Heart left ventricle (tissue), 16 donors: ENCODE measurements at regions of chr2 and their contacts with region 1.

Region 1: GRCh38 chr2:110157153-110157793 is 41.7 kb upstream of the MALL start:
- DNase-seq: peak in 2 of 5 donors; percentile 14 to 21
- ATAC-seq: peak; percentile 58 to 88 (median 78)
- H3K4me3 ChIP-seq: no peak overlapping the region
- H3K27ac ChIP-seq: peak overlapping the region in 4 of 12 donors; percentile 36 to 66 (median 52)
- H3K4me1 ChIP-seq: peaks cover 0 to 11% (median 0%) of the 10 kb centered on the region in 12 donors
- H3K27me3 ChIP-seq: no peaks in the 10 kb centered on the region
- CTCF ChIP-seq: peak; percentile 68 to 88 (median 82)
- POLR2A ChIP-seq: no peak

Region 2: GRCh38 chr2:110116033-110116710 is 41.1 kb before region 1 on chr2:
- intact Hi-C with region 1: loop called in 5 of 10 experiments (anchors 2 to 5 kb)
- DNase-seq: peak; percentile 64 to 76 (median 66)
- ATAC-seq: peak; percentile 72 to 83 (median 75)
- H3K4me3 ChIP-seq: peak overlapping the region; percentile 20 to 69 (median 56)
- H3K27ac ChIP-seq: peak overlapping the region; percentile 30 to 88 (median 84)
- H3K4me1 ChIP-seq: peaks cover 0 to 50% (median 23%) of the 10 kb centered on the region in 12 donors
- H3K27me3 ChIP-seq: peaks cover 0 to 27% (median 17%) of the 10 kb centered on the region in 9 donors
- CTCF ChIP-seq: peak; percentile 25 to 73 (median 52)
- POLR2A ChIP-seq: no peak

Region 3: GRCh38 chr2:110677530-110678456 is 520.5 kb after region 1 on chr2 and contains the start of gene BUB1:
- intact Hi-C with region 1: no loop called
- DNase-seq: peak; percentile 97 to 98 (median 98)
- ATAC-seq: peak; percentile 99 to 100 (median 100)
- H3K4me3 ChIP-seq: peak within 1 kb of the TSS; percentile 61 to 89 (median 76)
- H3K27ac ChIP-seq: peak within 1 kb of the TSS; percentile 59 to 91 (median 86)
- H3K4me1 ChIP-seq: peaks cover 0 to 35% (median 8%) of the 10 kb centered on the region in 12 donors
- H3K27me3 ChIP-seq: no peaks in the 10 kb centered on the region
- CTCF ChIP-seq: no peak
- POLR2A ChIP-seq: peak in 1 of 2 donors; percentile 80
- total RNA-seq, gene BUB1: 0.30 to 8.3 (median 1.1) TPM in 8 of 9 donors, not detected in the other